Spleen (tissue), 13 donors: ENCODE measurements at regions of chr2 and their contacts with region 1.

Region 1: GRCh38 chr2:146734042-146734820 is 1110.6 kb upstream of the ACVR2A start:
- DNase-seq: no peak
- H3K4me3 ChIP-seq: no peak overlapping the region
- H3K27ac ChIP-seq: no peak overlapping the region
- H3K4me1 ChIP-seq: no peaks in the 10 kb centered on the region
- H3K27me3 ChIP-seq: no peaks in the 10 kb centered on the region
- CTCF ChIP-seq: peak in 7 of 11 experiments; percentile 15 to 51 (median 46)
- POLR2A ChIP-seq: no peak

Region 2: GRCh38 chr2:147904044-147904443 is 1169.8 kb after region 1 on chr2:
- intact Hi-C with region 1: loop called (anchors 10 kb)
- DNase-seq: no peak
- H3K4me3 ChIP-seq: no peak overlapping the region
- H3K27ac ChIP-seq: no peak overlapping the region
- H3K4me1 ChIP-seq: no peaks in the 10 kb centered on the region
- H3K27me3 ChIP-seq: no peaks in the 10 kb centered on the region
- CTCF ChIP-seq: no peak
- POLR2A ChIP-seq: no peak